Motor neuron (in vitro differentiated cells): ENCODE measurements at regions of chrX and their contacts with region 1.

Region 1: DNA sequence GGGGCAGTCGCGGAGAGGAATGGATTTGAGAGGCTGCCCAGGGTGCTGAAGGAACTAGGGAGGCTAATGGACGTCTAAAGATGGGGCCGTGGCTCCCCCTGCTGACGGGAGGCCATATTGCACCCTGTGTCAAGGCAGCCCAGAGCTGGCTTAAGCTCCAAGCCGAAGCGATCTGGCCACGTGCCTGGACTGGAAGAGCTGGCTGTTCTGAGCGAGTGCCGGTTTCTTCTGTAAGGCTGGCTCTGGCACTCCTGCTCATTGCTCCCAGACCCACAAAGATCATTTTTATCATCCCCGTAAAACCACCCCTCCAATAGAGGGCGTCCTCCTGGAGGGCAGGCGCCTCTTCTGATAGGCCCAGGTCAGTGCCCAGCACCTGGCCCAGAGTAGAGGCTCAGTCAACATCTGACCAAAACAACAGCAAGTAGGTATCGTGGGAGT is 5.6 kb downstream of the PNCK start:
- ATAC-seq: peak; percentile 85 to 95 (median 92)
- H3K4me3 ChIP-seq: peak overlapping the region in 3 of 5 donors; percentile 13 to 27 (median 26)
- H3K27ac ChIP-seq: no peak overlapping the region
- H3K4me1 ChIP-seq: peaks cover 0 to 7% of the 10 kb centered on the region in 2 donors

Region 2: GRCh38 chrX:153539171-153539978 is 128.6 kb before region 1 on chrX:
- in situ Hi-C with region 1: loop called in 1 of 9 experiments (anchors 25 kb)
- ATAC-seq: peak; percentile 80 to 96 (median 84)
- H3K4me3 ChIP-seq: no peak overlapping the region
- H3K27ac ChIP-seq: no peak overlapping the region
- H3K4me1 ChIP-seq: peaks cover 9 to 12% of the 10 kb centered on the region in 2 donors

Region 3: GRCh38 chrX:153554519-153555167 is 113.3 kb before region 1 on chrX:
- in situ Hi-C with region 1: loop called in 3 of 9 experiments (anchors 25 kb)
- ATAC-seq: peak; percentile 65 to 90 (median 75)
- H3K4me3 ChIP-seq: no peak overlapping the region
- H3K27ac ChIP-seq: no peak overlapping the region
- H3K4me1 ChIP-seq: peaks cover 2 to 3% of the 10 kb centered on the region in 2 donors